ENCODE measurements at regions of chr4 and their contacts with region 1.

Region 1: DNA sequence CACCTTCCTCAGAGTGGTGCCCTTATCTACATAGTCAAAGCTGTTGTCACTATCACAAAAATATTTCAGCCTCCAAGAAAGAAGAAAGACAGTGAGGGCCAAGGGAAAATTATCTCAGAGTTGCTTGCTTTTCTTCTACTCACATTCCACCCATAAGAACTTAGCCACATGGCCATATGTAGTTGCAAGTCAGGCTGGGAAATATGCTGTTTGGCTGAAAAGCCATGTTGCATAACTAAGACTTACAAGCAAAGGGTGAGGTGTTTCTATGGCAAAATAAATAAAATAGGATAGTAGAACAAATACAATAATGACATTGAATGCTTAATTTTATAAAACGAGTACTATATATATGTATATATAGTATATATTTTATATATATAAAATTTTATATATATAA is 365.9 kb upstream of the PABPC4L start:
- DNase-seq: no peak
- ATAC-seq: no peak
- H3K4me3 ChIP-seq: no peak overlapping the region
- H3K4me3 Mint-ChIP-seq: no peak overlapping the region
- H3K27ac ChIP-seq: no peak overlapping the region
- H3K27ac Mint-ChIP-seq: no peak overlapping the region
- H3K4me1 ChIP-seq: no peaks in the 10 kb centered on the region
- H3K4me1 Mint-ChIP-seq: no peaks in the 10 kb centered on the region
- H3K27me3 ChIP-seq: no peaks in the 10 kb centered on the region
- H3K27me3 Mint-ChIP-seq: no peaks in the 10 kb centered on the region
- CTCF ChIP-seq: no peak

Region 2: DNA sequence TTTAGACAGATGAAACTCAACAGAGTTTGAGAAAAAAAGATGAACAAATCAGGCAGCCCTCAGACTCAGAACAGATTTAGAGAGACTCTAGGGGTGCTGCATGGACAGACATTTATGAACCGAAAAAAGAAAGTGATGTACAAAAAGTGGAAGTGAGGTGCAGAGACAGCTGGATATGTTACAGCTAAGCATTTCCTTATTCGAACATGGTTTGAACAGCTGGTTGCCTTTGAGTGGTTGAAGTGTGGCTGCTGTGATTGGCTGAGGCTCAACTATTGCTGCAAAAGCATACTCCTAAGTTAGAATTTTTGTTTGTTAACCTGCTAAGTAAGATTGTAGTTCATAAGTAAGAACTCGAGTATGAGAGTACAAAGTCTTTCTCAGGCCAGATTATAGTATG is 34.4 kb before region 1 on chr4:
- CTCF ChIA-PET with region 1: no interaction called
- POLR2A ChIA-PET with region 1: no interaction called
- intact Hi-C with region 1: loop called in 1 of 2 experiments (anchors 1 kb)
- DNase-seq: no peak
- ATAC-seq: no peak
- H3K4me3 ChIP-seq: no peak overlapping the region
- H3K4me3 Mint-ChIP-seq: no peak overlapping the region
- H3K27ac ChIP-seq: no peak overlapping the region
- H3K27ac Mint-ChIP-seq: no peak overlapping the region
- H3K4me1 ChIP-seq: no peaks in the 10 kb centered on the region
- H3K4me1 Mint-ChIP-seq: no peaks in the 10 kb centered on the region
- H3K27me3 ChIP-seq: no peaks in the 10 kb centered on the region
- H3K27me3 Mint-ChIP-seq: no peaks in the 10 kb centered on the region
- CTCF ChIP-seq: no peak

Region 3: DNA sequence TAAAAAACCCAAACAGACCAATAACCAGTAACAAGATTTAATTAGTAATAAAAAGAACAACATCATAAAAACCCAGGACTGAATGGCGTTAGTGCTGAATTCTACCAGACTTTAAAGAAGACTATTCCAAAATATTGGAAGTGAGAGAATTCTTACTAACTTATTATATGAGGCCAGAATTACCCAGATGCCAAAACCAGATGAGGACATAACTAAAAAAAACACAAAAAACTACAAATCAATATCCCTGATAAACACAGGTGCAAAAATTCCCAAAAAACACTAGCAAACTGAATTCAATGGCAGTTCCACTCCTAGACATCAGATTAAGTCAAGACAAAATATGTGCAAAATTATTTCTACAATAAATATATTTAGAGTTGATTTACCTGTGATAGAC is 34.2 kb after region 1 on chr4:
- CTCF ChIA-PET with region 1: no interaction called
- POLR2A ChIA-PET with region 1: no interaction called
- intact Hi-C with region 1: no loop called
- DNase-seq: no peak
- ATAC-seq: no peak
- H3K4me3 ChIP-seq: no peak overlapping the region
- H3K4me3 Mint-ChIP-seq: no peak overlapping the region
- H3K27ac ChIP-seq: no peak overlapping the region
- H3K27ac Mint-ChIP-seq: no peak overlapping the region
- H3K4me1 ChIP-seq: no peaks in the 10 kb centered on the region
- H3K4me1 Mint-ChIP-seq: no peaks in the 10 kb centered on the region
- H3K27me3 ChIP-seq: no peaks in the 10 kb centered on the region
- H3K27me3 Mint-ChIP-seq: no peaks in the 10 kb centered on the region
- CTCF ChIP-seq: no peak

Measured in CD4-positive, alpha-beta T cell (primary cell).